A549 (cell line): ENCODE measurements at regions of chr7 and their contacts with region 1.

Region 1: DNA sequence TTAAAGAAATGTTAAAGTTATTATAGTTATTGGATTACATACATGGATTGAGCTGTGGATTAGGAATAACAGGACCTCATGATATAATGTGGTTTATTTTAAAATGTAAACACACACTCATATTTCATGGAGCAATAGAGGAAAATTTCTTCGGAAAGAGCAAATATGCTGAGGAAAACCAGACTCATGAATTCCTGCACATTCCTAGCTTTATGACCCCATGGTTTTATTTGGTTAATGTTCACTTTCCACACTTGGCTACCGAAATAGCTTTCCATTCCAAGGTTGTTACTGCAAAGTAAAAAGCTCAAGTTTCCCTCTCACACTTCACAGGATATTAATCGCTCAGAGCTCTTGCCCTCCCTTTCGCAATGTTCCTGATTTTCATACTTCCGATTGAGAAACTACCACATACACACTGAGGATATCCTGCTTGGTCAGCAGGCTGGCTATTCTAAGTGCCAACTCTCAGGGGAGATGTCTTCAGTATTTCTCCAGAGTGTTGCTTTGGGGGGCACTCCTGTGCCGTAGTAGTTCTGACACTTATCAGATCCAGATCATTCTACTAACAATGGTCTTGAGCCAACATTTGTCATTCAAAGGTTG is 77.5 kb upstream of the STEAP1B start:
- DNase-seq: peak in 1 of 2 experiments; percentile 68
- ATAC-seq: peak; percentile 82 to 84
- H3K4me3 ChIP-seq: no peak overlapping the region
- H3K27ac ChIP-seq: peak overlapping the region; percentile 57 to 84
- H3K4me1 ChIP-seq: peaks cover 28% of the 10 kb centered on the region
- CTCF ChIP-seq: 0 out of 3 replicates have a peak, but pooled peaks have one; percentile 10
- EP300 ChIP-seq: peak; percentile 74 to 87; a peak in 3 of 5 replicates
- POLR2A ChIP-seq: no peak
- RAD21 ChIP-seq: peak in 1 of 2 experiments; percentile 41; a peak in 2 of 5 replicates

Region 2: DNA sequence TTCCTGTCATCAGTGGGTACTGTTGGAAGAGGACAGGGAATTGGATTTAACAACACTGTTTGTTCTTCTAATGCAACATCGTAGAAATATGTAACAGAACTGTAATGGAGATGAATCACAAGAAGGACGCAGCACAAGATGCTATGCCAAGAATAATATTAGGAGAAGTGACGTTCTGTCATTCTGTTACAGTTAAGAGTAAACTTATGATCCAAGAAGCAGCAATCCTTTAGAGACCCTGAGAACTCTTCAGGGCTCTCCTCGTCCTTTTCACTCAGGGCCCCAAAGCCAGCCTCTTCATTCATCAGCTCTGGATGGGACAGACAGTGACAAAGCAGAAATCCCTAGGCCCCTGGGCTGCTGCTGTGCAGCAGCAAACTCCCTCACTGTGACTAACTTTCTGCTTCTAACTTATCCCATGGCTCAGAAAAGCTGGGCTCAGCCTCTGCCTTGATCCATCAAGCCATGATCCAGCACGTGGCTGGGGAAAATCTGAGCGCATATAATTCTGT is 140.8 kb after region 1 on chr7:
- CTCF ChIA-PET with region 1: interaction called, 17 read pairs
- POLR2A ChIA-PET with region 1: interaction called, 3 read pairs
- DNase-seq: peak in 1 of 2 experiments; percentile 76
- ATAC-seq: peak; percentile 92 to 95
- H3K4me3 ChIP-seq: no peak overlapping the region
- H3K27ac ChIP-seq: peak overlapping the region; percentile 76 to 82
- H3K4me1 ChIP-seq: peaks cover 23% of the 10 kb centered on the region
- CTCF ChIP-seq: no peak
- EP300 ChIP-seq: peak; percentile 72 to 77; a peak in 2 of 5 replicates
- POLR2A ChIP-seq: no peak
- RAD21 ChIP-seq: no peak; a peak in 1 of 5 replicates

Region 3: GRCh38 chr7:22732556-22733126 is 155.1 kb after region 1 on chr7:
- CTCF ChIA-PET with region 1: interaction called, 17 read pairs
- POLR2A ChIA-PET with region 1: interaction called, 4 read pairs
- DNase-seq: peak in 1 of 2 experiments; percentile 28
- ATAC-seq: peak; percentile 60 to 65; a peak in 4 of 6 replicates
- H3K4me3 ChIP-seq: no peak overlapping the region
- H3K27ac ChIP-seq: no peak overlapping the region
- H3K4me1 ChIP-seq: peaks cover 9% of the 10 kb centered on the region; the same call in 1 of the 3 replicates
- CTCF ChIP-seq: peak; percentile 34; the same call in 2 of the 3 replicates
- EP300 ChIP-seq: no peak
- POLR2A ChIP-seq: no peak
- RAD21 ChIP-seq: peak; percentile 45 to 53; a peak in 4 of 5 replicates